CD4-positive, alpha-beta memory T cell (primary cell): ENCODE measurements at regions of chr1 and their contacts with region 1.

Region 1: GRCh38 chr1:223515926-223516325 is 122.7 kb downstream of the CCDC185 start:
- DNase-seq: no peak
- H3K4me3 ChIP-seq: peak overlapping the region in 1 of 2 donors; percentile 26
- H3K4me3 Mint-ChIP-seq: peak overlapping the region in 7 of 8 donors; percentile 49 to 89 (median 66)
- H3K27ac ChIP-seq: peak overlapping the region; percentile 42
- H3K27ac Mint-ChIP-seq: peak overlapping the region; percentile 68 to 94 (median 87)
- H3K4me1 ChIP-seq: peaks cover 39% of the 10 kb centered on the region
- H3K4me1 Mint-ChIP-seq: peaks cover 13 to 66% (median 48%) of the 10 kb centered on the region in 4 donors
- H3K27me3 ChIP-seq: no peaks in the 10 kb centered on the region
- H3K27me3 Mint-ChIP-seq: no peaks in the 10 kb centered on the region

Region 2: DNA sequence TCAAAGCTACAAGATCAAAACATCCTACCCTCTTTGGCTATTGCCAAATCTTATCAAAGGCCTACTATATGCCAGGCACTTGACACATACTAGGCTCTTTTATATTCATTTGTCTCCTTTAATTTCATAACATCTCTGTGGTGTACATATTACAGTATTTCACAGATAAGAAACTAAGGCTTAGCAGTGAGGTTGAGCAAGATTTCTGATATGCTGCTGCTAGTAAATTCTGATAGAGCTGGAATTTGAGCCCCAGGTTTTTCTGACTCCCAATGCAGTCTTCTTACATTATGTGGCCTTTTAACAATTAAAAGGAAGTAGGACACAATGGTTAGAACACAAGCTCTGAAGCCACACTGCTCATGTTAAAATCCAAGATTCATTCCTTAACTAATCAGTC is 105.9 kb before region 1 on chr1:
- CTCF ChIA-PET with region 1: no interaction called
- POLR2A ChIA-PET with region 1: no interaction called
- intact Hi-C with region 1: no loop called
- DNase-seq: no peak
- H3K4me3 ChIP-seq: no peak overlapping the region
- H3K4me3 Mint-ChIP-seq: no peak overlapping the region
- H3K27ac ChIP-seq: no peak overlapping the region
- H3K27ac Mint-ChIP-seq: no peak overlapping the region
- H3K4me1 ChIP-seq: peaks cover 6% of the 10 kb centered on the region
- H3K4me1 Mint-ChIP-seq: peaks cover 3 to 16% (median 8%) of the 10 kb centered on the region in 4 donors
- H3K27me3 ChIP-seq: no peaks in the 10 kb centered on the region
- H3K27me3 Mint-ChIP-seq: peaks cover 3 to 6% of the 10 kb centered on the region in 2 donors

Region 3: DNA sequence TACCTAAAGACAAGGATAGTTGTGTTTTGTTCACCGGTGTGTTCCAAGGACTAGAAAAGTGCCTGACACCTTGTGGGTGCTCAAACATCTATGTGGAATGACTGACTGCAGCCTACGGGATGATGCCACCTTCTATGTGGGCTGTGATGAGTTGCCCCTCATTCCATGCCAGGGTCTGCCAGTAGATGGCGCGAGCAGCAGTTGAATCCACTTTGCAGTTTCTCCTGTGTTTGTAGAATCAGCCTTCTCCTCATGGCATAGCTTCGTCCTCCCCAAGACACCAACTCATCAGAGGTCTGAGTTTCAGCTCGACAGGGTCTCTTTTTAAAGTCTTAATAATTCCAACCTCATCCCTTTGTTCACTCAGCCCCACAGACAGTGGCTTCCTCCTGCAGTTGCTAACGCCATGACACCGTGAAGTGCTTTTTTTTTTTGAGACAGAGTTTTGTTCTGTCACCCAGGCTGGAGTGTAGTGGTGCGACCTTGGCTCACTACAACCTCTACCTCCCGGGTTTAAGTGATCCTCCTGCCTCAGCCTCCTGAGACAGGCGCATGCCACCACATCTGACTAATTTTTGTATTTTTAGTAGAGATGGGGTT is 15.9 kb after region 1 on chr1:
- CTCF ChIA-PET with region 1: interaction called, 30 read pairs
- POLR2A ChIA-PET with region 1: interaction called, 3 read pairs
- intact Hi-C with region 1: no loop called
- DNase-seq: peak in 4 of 5 donors; percentile 8 to 22 (median 12)
- H3K4me3 ChIP-seq: no peak overlapping the region
- H3K4me3 Mint-ChIP-seq: no peak overlapping the region
- H3K27ac ChIP-seq: no peak overlapping the region
- H3K27ac Mint-ChIP-seq: no peak overlapping the region
- H3K4me1 ChIP-seq: peaks cover 4% of the 10 kb centered on the region
- H3K4me1 Mint-ChIP-seq: peaks cover 0 to 11% (median 8%) of the 10 kb centered on the region in 4 donors
- H3K27me3 ChIP-seq: no peaks in the 10 kb centered on the region
- H3K27me3 Mint-ChIP-seq: peaks cover 0 to 2% of the 10 kb centered on the region in 2 donors